Common myeloid progenitor, CD34-positive (primary cell): ENCODE measurements at regions of chr12 and their contacts with region 1.

Region 1: GRCh38 chr12:68623984-68624383 is 13.3 kb downstream of the RAP1B start:
- DNase-seq: no peak
- H3K4me3 ChIP-seq: no peak overlapping the region
- H3K27ac ChIP-seq: no peak overlapping the region
- H3K4me1 ChIP-seq: peaks cover 9 to 35% (median 11%) of the 10 kb centered on the region in 4 experiments
- H3K27me3 ChIP-seq: no peaks in the 10 kb centered on the region

Region 2: GRCh38 chr12:68358532-68359485 is 265.2 kb before region 1 on chr12:
- CTCF ChIA-PET with region 1: interaction called, 11 read pairs
- POLR2A ChIA-PET with region 1: no interaction called
- DNase-seq: peak; percentile 83 to 90 (median 89)
- H3K4me3 ChIP-seq: no peak overlapping the region
- H3K27ac ChIP-seq: peak overlapping the region in 1 of 2 experiments; percentile 57
- H3K4me1 ChIP-seq: peaks cover 17 to 60% (median 45%) of the 10 kb centered on the region in 4 experiments
- H3K27me3 ChIP-seq: no peaks in the 10 kb centered on the region

Region 3: GRCh38 chr12:68648179-68648578 is 24.2 kb after region 1 on chr12:
- CTCF ChIA-PET with region 1: no interaction called
- POLR2A ChIA-PET with region 1: no interaction called
- DNase-seq: no peak
- H3K4me3 ChIP-seq: no peak overlapping the region
- H3K27ac ChIP-seq: no peak overlapping the region
- H3K4me1 ChIP-seq: peaks cover 0 to 6% (median 0%) of the 10 kb centered on the region in 4 experiments
- H3K27me3 ChIP-seq: no peaks in the 10 kb centered on the region